Right cardiac atrium (tissue), 5 donors: ENCODE measurements at regions of chr11 and their contacts with region 1.

Region 1: GRCh38 chr11:10623797-10624761 is 55.6 kb upstream of the LYVE1 start:
- DNase-seq: peak in 2 of 3 donors; percentile 66 to 78
- ATAC-seq: peak in 1 of 2 donors; percentile 36
- H3K4me3 ChIP-seq: no peak overlapping the region
- H3K27ac ChIP-seq: no peak overlapping the region
- H3K4me1 ChIP-seq: peaks cover 2% of the 10 kb centered on the region
- H3K27me3 ChIP-seq: no peaks in the 10 kb centered on the region

Region 2: DNA sequence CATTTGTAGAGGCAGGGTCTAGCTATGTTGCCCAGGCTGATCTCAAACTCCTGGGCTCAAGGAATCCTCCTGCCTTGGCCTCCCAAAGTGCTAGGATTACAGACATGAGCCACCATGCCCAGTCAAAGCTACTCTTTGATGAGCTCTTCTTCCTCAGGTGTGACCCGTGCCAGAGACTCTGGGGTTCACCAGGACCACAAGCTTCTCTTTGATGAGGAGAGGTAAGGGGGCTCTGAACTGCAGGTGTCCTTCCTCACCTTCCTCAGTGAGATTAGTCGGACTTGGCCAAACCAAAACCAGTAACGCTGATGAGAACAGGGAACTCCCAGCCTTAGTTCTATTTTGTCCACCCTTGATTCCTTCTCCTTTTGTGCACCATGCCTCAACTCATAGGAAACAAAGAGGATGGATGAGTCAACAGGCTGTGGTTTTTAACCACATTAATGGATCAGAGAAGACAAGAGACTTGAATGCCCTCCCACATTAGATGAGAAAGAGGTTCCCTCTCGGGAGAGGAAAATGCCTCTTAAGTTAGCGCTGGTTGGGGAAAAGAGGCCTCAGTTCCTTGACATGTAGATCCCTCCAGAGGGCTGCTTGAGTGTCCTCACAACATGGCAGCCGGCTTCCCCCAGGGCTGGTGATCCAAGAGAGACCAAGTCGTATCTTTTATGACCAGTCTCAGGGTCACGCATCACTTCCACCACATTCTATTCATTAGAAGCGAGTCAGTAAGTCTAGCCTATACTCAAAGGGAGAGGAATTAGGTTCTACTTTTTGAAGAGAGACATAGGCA is 101.2 kb after region 1 on chr11:
- intact Hi-C with region 1: loop called in 1 of 4 experiments (anchors 5 kb)
- DNase-seq: no peak
- ATAC-seq: peak; percentile 35 to 40
- H3K4me3 ChIP-seq: no peak overlapping the region
- H3K27ac ChIP-seq: no peak overlapping the region
- H3K4me1 ChIP-seq: peaks cover 3% of the 10 kb centered on the region
- H3K27me3 ChIP-seq: no peaks in the 10 kb centered on the region